Gastrocnemius medialis (tissue), 4 donors: ENCODE measurements at regions of chr1 and their contacts with region 1.

Region 1: DNA sequence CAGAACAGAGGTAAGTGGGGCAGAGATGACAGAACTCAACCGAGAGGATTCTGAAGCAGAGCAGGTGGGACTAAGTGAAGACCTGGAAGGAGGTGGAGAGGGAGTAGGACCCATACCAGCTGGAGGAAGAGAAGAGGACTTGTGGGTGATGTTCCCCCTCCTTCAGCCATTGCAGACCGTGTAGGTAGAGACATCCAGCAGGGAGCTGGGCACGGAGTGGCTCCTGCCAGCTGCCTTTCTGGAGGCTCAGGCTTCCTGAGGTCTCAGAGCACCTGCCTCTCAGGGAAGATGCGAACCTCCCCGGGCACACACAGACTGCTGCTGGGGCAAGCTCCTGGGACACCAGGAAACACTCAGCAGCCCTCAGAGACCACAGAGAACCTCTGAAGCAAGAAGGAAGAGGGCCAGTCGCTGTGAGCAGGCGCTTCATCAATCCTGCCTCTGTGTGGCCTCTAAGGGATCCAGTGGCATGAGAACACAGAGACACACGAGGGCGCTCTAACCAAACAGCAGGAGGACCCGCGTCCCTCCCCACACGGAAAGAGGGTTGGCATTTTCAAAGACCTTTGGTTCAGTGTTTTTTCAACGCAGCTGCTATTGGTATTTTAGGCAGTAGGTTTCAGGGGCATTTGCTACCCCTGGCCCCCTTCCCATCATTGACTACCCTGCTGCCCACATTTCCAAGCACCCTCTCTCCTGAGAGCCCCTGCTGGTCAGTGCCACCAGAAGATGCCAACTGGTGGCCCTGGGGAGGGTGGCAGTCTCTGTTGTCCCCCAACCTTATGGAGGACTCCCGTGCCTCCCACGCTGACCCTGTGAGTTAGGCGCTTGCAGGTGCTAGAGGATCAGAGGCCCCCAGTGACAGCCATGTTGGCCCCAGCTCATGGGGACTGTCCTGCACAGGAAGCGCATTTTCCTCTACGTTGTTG is 89.6 kb upstream of the EDN2 start:
- DNase-seq: peak; percentile 48 to 71
- ATAC-seq: peak; percentile 88 to 95
- H3K4me3 ChIP-seq: no peak overlapping the region
- H3K27ac ChIP-seq: no peak overlapping the region
- H3K4me1 ChIP-seq: peaks cover 3 to 7% of the 10 kb centered on the region in 2 donors
- H3K27me3 ChIP-seq: no peaks in the 10 kb centered on the region
- CTCF ChIP-seq: peak; percentile 79 to 91 (median 84)
- POLR2A ChIP-seq: no peak

Region 2: GRCh38 chr1:41492341-41492848 is 81.7 kb before region 1 on chr1:
- in situ Hi-C with region 1: no loop called
- intact Hi-C with region 1: no loop called
- DNase-seq: no peak
- ATAC-seq: no peak
- H3K4me3 ChIP-seq: no peak overlapping the region
- H3K27ac ChIP-seq: no peak overlapping the region
- H3K4me1 ChIP-seq: peaks cover 15 to 18% of the 10 kb centered on the region in 2 donors
- H3K27me3 ChIP-seq: no peaks in the 10 kb centered on the region
- CTCF ChIP-seq: peak in 4 of 5 experiments; percentile 13 to 50 (median 32)
- POLR2A ChIP-seq: no peak

Region 3: DNA sequence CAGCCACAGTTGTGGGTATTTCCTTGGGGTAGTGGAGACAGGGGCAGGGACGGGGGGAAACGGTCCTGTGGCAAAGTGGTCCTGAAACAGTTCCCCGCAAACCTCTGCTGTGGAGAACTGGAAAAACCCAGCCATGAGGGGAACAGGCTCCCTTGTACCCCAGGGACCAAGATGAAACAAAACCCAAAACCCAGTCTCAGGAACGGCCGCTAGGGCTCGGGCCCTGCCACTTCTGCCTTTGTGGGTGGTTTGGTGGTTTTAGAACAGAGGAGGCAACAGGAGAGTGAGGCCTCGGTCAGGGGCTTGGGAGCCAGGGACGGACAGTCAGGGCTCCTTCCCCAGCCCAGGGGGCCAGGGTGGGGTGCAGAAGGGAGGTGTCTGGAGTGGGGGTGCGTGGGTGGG is 64.8 kb before region 1 on chr1:
- in situ Hi-C with region 1: no loop called
- intact Hi-C with region 1: no loop called
- DNase-seq: no peak
- ATAC-seq: no peak
- H3K4me3 ChIP-seq: no peak overlapping the region
- H3K27ac ChIP-seq: no peak overlapping the region
- H3K4me1 ChIP-seq: no peaks in the 10 kb centered on the region
- H3K27me3 ChIP-seq: no peaks in the 10 kb centered on the region
- CTCF ChIP-seq: no peak
- POLR2A ChIP-seq: no peak

Region 4: DNA sequence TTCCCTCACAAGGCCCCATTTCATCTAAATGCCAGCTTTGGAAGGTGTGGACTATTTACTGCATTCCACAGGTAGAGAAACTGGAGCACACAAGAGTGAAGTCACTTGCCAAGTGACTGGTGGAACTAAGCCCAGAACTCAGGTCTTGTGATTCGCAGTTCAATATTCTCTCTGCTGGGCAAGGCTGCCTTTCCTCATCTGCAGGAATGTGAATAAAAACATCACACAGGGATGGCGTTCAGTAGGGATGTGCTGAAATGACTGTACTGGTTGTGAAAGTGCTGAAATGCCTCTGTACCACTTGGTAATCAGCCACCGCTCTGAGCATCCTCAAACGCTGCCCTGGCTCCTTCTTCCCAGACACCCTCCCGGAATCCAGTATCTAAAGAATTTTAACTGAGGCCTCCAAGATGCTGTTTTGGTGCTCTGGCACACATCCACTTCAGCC is 199.1 kb after region 1 on chr1:
- in situ Hi-C with region 1: no loop called
- intact Hi-C with region 1: no loop called
- DNase-seq: peak; percentile 30 to 49
- ATAC-seq: peak in 1 of 2 donors; percentile 18
- H3K4me3 ChIP-seq: no peak overlapping the region
- H3K27ac ChIP-seq: peak overlapping the region in 2 of 4 donors; percentile 71 to 84
- H3K4me1 ChIP-seq: peaks cover 17 to 41% of the 10 kb centered on the region in 2 donors
- H3K27me3 ChIP-seq: no peaks in the 10 kb centered on the region
- CTCF ChIP-seq: no peak
- POLR2A ChIP-seq: no peak

Region 5: DNA sequence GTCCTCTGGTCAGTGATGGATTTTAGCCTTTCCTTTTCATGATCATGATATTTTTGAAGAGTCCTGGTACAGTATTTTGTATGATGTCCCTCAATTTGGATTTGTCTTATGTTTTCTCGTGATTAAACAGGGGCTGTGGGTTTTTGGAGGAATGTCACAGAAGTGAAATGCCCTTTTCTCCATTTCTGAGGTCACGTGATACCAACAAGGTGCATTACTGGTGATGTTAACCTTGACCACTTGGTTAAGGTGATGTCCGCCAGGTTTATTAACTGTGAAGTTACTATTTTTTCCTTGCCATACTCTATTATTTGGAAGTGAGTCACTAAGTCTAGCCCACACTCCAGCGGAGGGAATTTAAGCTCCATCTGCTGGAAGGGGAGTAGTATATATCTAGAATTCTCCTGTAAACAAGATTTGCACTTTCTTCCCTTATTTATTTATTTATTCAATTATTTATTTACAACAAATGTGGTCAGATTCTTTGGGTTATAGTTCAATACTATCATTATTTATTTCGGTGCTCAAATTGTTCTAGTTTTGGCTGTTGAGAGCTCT is 221.2 kb after region 1 on chr1:
- in situ Hi-C with region 1: loop called (anchors 5 to 10 kb)
- intact Hi-C with region 1: loop called (anchors 1 kb)
- DNase-seq: no peak
- ATAC-seq: peak in 1 of 2 donors; percentile 81
- H3K4me3 ChIP-seq: no peak overlapping the region
- H3K27ac ChIP-seq: no peak overlapping the region
- H3K4me1 ChIP-seq: no peaks in the 10 kb centered on the region
- H3K27me3 ChIP-seq: no peaks in the 10 kb centered on the region
- CTCF ChIP-seq: peak; percentile 16 to 50 (median 31)
- POLR2A ChIP-seq: no peak

Region 6: DNA sequence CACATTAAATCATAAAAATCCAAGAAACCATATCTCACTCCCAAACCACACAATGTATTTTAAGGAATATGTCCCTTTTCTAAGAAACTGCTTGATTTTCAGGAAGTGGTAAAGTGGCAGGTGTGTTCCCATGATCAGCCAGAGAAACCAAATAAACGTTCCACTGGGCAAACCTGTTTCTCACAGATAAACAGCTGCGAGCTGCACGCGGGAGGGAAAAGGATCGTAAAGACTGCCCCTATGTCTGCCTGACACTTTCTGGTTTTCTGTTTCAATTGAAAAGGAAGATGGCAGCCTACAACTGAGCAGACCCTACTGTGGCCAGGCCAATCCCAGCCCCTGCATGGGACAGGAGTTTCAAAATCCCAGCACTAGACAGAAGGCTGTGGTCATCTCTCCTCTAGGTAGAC is 308.0 kb after region 1 on chr1:
- in situ Hi-C with region 1: no loop called
- intact Hi-C with region 1: no loop called
- DNase-seq: no peak
- ATAC-seq: peak; percentile 41 to 42
- H3K4me3 ChIP-seq: peak overlapping the region in 2 of 4 donors; percentile 6 to 20
- H3K27ac ChIP-seq: peak overlapping the region; percentile 78 to 83 (median 80)
- H3K4me1 ChIP-seq: peaks cover 53% of the 10 kb centered on the region in 2 donors
- H3K27me3 ChIP-seq: no peaks in the 10 kb centered on the region
- CTCF ChIP-seq: no peak
- POLR2A ChIP-seq: no peak

Region 7: GRCh38 chr1:42165511-42166163 is 591.6 kb after region 1 on chr1:
- in situ Hi-C with region 1: loop called in 3 of 4 experiments (anchors 10 kb)
- intact Hi-C with region 1: no loop called
- DNase-seq: no peak
- ATAC-seq: peak; percentile 34 to 49
- H3K4me3 ChIP-seq: no peak overlapping the region
- H3K27ac ChIP-seq: peak overlapping the region in 1 of 4 donors; percentile 25
- H3K4me1 ChIP-seq: peaks cover 6% of the 10 kb centered on the region in 2 donors
- H3K27me3 ChIP-seq: no peaks in the 10 kb centered on the region
- CTCF ChIP-seq: no peak
- POLR2A ChIP-seq: no peak